Head of caudate nucleus (tissue), 42 donors: ENCODE measurements at regions of chr2 and their contacts with region 1.

Region 1: DNA sequence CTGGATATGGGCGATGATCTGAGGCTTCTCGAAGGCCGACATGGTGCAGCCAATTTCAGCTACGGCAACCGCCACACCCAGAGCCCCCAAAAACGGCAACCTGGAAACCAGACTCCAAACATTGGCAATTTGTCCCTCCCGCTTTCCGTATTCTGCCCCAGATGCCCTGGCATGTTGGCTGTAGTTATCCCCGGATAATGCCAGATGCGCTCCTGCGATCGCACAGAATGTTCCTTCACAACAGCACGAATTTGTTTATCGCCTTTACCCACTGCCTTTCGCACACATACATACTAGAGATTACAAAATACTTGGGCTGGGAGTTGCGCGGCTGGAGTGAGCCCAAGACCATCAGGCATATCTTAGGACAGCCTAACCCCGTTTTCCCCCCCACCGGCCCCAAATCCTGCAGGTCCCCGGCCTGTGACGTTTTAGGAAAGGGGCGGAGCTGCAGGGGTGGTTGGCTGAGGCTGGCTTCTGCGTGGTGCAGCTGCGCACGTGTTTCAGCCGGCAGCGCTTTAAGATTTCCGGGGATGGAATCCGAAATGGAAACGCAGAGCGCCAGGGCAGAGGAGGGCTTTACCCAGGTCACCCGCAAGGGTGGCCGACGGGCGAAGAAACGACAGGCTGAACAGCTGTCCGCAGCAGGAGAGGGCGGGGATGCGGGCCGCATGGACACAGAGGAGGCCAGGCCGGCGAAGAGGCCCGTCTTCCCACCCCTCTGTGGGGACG is at the start of gene PNO1:
- DNase-seq: peak; percentile 90 to 98 (median 96)

Region 2: DNA sequence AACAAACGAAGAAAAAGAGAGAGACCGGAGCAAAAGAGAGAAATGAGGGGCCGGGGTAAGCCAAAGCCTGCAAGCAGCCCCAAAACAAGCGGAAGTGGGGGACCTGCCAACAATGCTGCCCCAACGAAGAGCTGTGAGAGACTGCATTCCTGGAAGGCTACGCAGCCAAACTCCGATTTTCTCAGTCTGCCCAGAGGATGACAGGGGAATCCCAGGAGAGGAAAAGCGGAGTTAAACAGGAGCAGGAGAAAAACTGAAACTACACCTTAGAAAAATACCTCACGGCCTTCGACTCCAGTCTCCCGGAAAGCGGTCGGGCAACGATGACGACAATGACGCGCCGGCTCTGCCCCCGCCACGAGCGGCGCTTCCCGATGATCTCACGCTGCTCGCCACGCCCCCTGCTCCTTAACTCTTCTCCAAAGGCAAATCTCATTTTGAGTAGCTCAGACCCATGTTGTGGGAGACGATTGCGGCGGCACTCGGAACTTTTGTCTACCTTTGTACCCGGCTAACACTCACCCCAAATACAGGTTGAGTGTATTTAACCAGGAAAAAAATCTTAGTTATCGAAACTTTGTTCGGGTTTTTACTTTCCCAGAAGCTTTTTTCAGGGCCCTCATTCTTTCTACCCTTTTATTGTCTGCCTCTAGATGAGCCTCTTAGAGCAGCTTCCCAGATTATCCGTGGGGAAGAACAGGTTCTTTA is 94.7 kb before region 1 on chr2 and contains the start of gene C1D:
- intact Hi-C with region 1: loop called (anchors 5 kb)
- DNase-seq: peak; percentile 87 to 97 (median 94)

Region 3: GRCh38 chr2:68251187-68251854 is 93.8 kb after region 1 on chr2:
- intact Hi-C with region 1: loop called (anchors 5 kb)
- DNase-seq: peak; percentile 37 to 83 (median 63)

Region 4: DNA sequence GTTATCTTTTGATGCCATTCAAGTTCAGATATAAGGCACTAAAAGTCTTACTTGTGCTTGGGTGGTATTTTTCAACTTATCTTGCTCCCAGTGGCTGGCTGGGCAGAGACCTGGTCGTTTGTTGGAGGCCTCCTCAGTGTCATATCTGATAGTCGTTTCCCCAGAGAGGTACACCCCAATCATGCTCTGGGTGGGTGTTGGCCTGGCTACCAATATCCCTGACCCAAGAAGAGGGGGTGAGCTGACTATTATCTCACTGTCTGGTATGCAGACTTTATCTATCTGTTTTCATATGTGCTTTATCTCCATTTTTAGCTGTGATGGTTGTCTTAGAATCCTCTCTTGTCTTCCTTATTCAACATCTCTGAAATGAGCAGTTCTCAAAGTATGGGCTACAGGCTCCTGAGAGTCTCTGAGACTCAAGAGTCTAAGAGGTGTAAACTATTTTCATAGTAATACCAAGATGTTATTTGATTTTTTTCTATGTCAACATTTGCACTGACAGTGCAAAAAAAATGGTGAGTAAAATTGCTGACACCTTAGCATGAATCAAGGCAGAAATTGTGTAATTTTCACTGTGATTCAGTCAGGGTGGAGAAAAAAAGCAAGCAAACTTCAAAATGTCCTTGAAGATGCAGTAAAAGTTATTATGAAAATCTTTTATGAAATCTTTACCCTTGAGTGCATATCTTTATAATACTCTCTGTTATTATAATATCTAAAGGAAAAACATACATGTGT is 195.3 kb after region 1 on chr2:
- intact Hi-C with region 1: no loop called
- DNase-seq: no peak